ENCODE measurements at regions of chr2 and their contacts with region 1.

Region 1: GRCh38 chr2:39124000-39124745 is 3.3 kb upstream of the SOS1 start:
- DNase-seq: peak; percentile 95
- H3K4me3 Mint-ChIP-seq: peak overlapping the region; percentile 97
- H3K27ac Mint-ChIP-seq: peak overlapping the region; percentile 96
- H3K4me1 Mint-ChIP-seq: peaks cover 49% of the 10 kb centered on the region
- H3K27me3 Mint-ChIP-seq: no peaks in the 10 kb centered on the region

Region 2: DNA sequence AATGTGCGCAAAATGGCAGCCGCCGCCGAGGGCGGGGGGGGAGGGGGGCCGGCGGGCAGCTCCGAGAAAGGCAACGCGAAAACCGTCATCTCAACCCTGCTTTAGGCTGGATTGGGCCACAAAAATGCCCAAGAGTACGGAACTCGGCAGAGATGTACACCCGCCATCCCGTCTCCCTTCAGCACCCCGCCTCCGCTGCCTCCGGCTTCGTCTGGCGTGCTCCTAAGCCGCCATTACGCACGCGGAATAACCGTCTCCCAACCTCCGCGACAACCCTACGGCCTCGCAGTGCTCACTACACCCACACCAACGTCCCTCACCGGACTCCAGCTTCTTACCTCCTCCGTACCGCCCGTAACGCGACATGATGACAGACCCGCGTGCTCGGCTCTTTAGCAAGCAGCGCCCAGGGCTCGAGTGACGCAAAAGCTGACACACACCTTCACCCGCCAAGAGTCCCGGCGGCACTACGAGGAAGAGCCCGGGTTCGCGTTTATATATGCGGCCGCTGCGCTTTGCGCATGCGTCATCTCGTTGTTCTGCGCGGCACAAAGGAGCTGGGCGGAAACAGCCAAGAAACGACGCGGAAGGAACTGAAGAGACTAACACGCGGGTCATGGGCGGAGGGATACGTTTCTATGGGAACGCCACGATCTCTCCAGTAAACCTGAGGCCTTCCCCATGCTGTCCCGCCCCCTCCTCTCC is 373.1 kb before region 1 on chr2 and contains the start of gene SRSF7:
- intact Hi-C with region 1: loop called (anchors 10 kb)
- DNase-seq: peak; percentile 97
- H3K4me3 Mint-ChIP-seq: peak within 1 kb of the TSS; percentile 98
- H3K27ac Mint-ChIP-seq: peak within 1 kb of the TSS; percentile 100
- H3K4me1 Mint-ChIP-seq: peaks cover 53% of the 10 kb centered on the region
- H3K27me3 Mint-ChIP-seq: no peaks in the 10 kb centered on the region
- total RNA-seq, gene SRSF7: 401 and 406 TPM in 2 replicates

Region 3: GRCh38 chr2:39099870-39100728 is 24.1 kb before region 1 on chr2:
- intact Hi-C with region 1: loop called (anchors 2 kb)
- DNase-seq: no peak
- H3K4me3 Mint-ChIP-seq: no peak overlapping the region
- H3K27ac Mint-ChIP-seq: peak overlapping the region; percentile 76
- H3K4me1 Mint-ChIP-seq: peaks cover 60% of the 10 kb centered on the region
- H3K27me3 Mint-ChIP-seq: no peaks in the 10 kb centered on the region

Region 4: GRCh38 chr2:39227628-39228412 is 103.6 kb after region 1 on chr2:
- intact Hi-C with region 1: loop called (anchors 1 kb)
- DNase-seq: peak; percentile 77
- H3K4me3 Mint-ChIP-seq: peak overlapping the region; percentile 72
- H3K27ac Mint-ChIP-seq: peak overlapping the region; percentile 67
- H3K4me1 Mint-ChIP-seq: peaks cover 42% of the 10 kb centered on the region
- H3K27me3 Mint-ChIP-seq: no peaks in the 10 kb centered on the region

Region 5: DNA sequence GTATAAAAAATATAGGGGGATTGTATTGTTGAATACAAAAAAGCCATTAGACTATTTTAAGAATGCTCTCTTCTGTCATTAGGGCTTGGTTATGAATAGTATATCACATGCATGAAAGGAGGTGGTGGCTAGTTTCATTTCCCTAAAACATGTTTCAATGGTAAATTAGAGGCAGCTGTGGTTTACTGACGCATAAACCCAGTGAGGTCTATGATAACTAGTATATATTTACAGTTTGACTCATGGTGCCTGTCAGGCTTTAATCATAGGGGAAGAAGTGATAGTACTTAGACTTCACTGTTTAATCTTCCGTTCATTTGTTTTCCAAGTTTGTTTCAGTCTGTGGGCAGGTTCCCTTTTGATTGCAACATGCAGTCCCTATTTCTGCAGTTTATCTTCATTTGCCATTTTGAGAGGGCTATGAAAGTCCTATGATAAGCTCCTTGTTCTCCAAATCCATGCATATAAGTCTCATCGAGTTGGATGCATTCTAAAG is 368.0 kb after region 1 on chr2:
- intact Hi-C with region 1: loop called (anchors 5 kb)
- DNase-seq: peak; percentile 20
- H3K4me3 Mint-ChIP-seq: peak overlapping the region; percentile 54
- H3K27ac Mint-ChIP-seq: peak overlapping the region; percentile 85
- H3K4me1 Mint-ChIP-seq: peaks cover 51% of the 10 kb centered on the region
- H3K27me3 Mint-ChIP-seq: peaks cover 9% of the 10 kb centered on the region